ENCODE measurements at regions of chr10 and their contacts with region 1.

Region 1: DNA sequence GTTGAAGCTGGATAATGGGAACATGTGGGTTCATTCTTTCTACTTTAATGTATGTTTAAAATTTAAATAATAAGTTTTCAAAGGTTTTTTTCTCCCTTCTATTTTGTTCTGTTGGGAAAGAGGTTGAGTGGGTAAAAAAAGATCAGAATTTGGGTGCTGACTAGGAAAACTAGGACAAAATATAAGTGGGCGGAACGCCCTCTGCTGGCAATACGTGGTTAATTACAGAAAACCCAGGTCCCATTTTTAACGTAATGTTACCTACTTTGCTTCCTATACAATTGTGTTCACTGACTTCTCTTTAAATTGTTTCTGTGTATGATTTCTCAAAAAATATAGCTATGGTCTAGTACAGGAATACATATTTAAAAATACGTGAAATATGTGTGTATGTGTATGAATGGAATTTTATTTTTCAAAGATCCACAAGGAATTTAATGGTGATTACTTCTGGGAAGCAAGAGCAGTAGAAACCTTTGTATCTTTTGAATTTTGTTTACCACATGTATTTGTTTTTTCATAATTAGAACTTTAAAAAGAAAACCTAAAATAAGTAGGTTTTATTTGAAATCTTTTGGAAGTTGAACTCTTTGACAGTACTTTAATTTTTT is 8.7 kb downstream of the ECD start:
- DNase-seq: peak; percentile 50 to 67 (median 57)
- H3K4me3 ChIP-seq: no peak overlapping the region
- H3K4me3 Mint-ChIP-seq: no peak overlapping the region
- H3K27ac ChIP-seq: no peak overlapping the region
- H3K27ac Mint-ChIP-seq: peak overlapping the region in 5 of 7 donors; percentile 25 to 81 (median 53)
- H3K4me1 ChIP-seq: peaks cover 30% of the 10 kb centered on the region
- H3K4me1 Mint-ChIP-seq: peaks cover 33 to 39% (median 35%) of the 10 kb centered on the region in 4 donors
- H3K27me3 ChIP-seq: no peaks in the 10 kb centered on the region
- H3K27me3 Mint-ChIP-seq: no peaks in the 10 kb centered on the region

Region 2: GRCh38 chr10:73076360-73077183 is 82.6 kb before region 1 on chr10:
- CTCF ChIA-PET with region 1: interaction called, 13 read pairs
- POLR2A ChIA-PET with region 1: no interaction called
- intact Hi-C with region 1: no loop called
- DNase-seq: no peak
- H3K4me3 ChIP-seq: no peak overlapping the region
- H3K4me3 Mint-ChIP-seq: peak overlapping the region in 2 of 8 donors; percentile 14 to 48
- H3K27ac ChIP-seq: no peak overlapping the region
- H3K27ac Mint-ChIP-seq: peak overlapping the region in 5 of 7 donors; percentile 3 to 75 (median 60)
- H3K4me1 ChIP-seq: no peaks in the 10 kb centered on the region
- H3K4me1 Mint-ChIP-seq: peaks cover 6 to 18% (median 9%) of the 10 kb centered on the region in 4 donors
- H3K27me3 ChIP-seq: no peaks in the 10 kb centered on the region
- H3K27me3 Mint-ChIP-seq: no peaks in the 10 kb centered on the region

Measured in CD4-positive, alpha-beta memory T cell (primary cell).